B cell (primary cell): ENCODE measurements at regions of chrX and their contacts with region 1.

Region 1: GRCh38 chrX:30652527-30653414 is 452 bp upstream of the GK start:
- DNase-seq: peak; percentile 93
- ATAC-seq: peak; percentile 88
- H3K4me3 ChIP-seq: peak overlapping the region; percentile 30 to 89 (median 75)
- H3K4me3 Mint-ChIP-seq: peak overlapping the region; percentile 94
- H3K27ac ChIP-seq: peak overlapping the region; percentile 88 to 92
- H3K27ac Mint-ChIP-seq: peak overlapping the region; percentile 96
- H3K4me1 ChIP-seq: peaks cover 8 to 9% of the 10 kb centered on the region in 2 donors
- H3K4me1 Mint-ChIP-seq: peaks cover 36% of the 10 kb centered on the region
- H3K27me3 ChIP-seq: no peaks in the 10 kb centered on the region
- H3K27me3 Mint-ChIP-seq: no peaks in the 10 kb centered on the region
- CTCF ChIP-seq: no peak

Region 2: DNA sequence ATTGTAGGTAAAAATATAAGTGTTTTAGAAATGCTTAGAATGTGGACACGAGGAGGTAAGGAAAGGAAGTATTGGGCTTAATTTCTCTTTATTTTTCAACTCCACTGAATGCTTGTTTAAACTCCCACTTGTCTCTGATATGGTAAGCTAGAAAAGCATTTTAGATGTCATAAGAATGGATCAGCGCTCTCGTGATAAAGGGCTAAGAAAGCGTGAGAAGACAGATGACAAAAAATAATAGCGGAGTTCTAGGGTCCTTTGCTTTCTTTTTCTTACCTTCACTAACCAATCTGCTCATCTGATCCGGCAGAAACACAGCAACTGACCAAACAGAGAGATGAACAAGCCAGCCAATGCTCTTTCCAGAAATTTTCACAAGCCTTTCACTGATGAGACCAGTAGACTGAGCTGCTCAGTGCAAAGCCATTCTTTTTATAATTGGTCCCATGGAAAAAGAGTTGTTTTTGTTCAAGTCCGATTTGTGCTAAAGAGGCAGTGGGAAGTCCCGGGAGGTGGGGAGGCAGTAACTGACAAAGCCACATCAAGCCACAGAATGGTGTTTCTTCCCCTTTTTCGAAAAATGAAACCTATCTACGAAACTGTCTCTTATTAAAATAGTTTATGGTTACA is 75.3 kb before region 1 on chrX and contains the start of gene TASL:
- CTCF ChIA-PET with region 1: no interaction called
- POLR2A ChIA-PET with region 1: no interaction called
- intact Hi-C with region 1: loop called (anchors 1 kb)
- DNase-seq: peak; percentile 81
- ATAC-seq: peak; percentile 85
- H3K4me3 ChIP-seq: peak within 1 kb of the TSS; percentile 55 to 96 (median 76)
- H3K4me3 Mint-ChIP-seq: peak within 1 kb of the TSS; percentile 99
- H3K27ac ChIP-seq: peak within 1 kb of the TSS; percentile 85 to 95
- H3K27ac Mint-ChIP-seq: peak within 1 kb of the TSS; percentile 99
- H3K4me1 ChIP-seq: peaks cover 20% of the 10 kb centered on the region in 2 donors
- H3K4me1 Mint-ChIP-seq: peaks cover 27% of the 10 kb centered on the region
- H3K27me3 ChIP-seq: no peaks in the 10 kb centered on the region
- H3K27me3 Mint-ChIP-seq: no peaks in the 10 kb centered on the region
- CTCF ChIP-seq: no peak
- total RNA-seq, gene TASL: 25.4 and 27.0 TPM in 2 replicates

Region 3: DNA sequence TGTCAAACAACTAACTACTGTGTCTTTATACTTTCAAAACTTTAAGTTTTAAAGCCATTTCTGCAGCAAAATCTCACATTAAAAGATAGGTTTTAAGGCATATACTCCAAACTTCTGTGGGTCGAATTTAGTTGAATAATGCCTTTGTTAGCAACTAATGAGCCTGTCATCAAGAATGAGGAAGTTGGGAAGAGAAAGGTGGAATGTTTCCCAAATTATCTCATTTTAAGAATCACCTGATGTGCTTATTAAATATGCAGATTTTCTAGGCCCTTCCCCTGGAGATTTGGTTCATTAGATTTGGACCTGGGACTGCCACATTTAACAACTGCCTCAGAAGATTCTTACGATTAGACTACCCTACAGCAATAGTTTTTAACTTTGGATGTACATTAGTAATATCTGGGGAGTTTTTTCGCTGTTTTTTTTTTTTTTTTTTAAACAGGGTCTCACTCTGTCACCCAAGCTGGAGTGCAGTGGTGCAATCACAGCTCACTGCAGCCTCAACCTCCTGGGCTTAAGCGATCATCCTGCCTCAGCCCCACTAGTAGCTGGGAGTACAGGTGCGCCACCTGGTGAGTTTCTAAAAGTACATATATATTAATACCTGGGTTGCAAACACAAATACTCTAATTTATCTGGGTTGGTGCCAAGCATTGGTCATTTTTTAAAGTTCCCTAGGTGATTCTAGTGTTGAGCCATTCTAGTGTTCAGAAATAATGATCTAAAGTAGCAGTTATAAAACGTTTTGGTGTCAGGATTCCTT is 59.2 kb before region 1 on chrX:
- CTCF ChIA-PET with region 1: no interaction called
- POLR2A ChIA-PET with region 1: interaction called, 3 read pairs
- intact Hi-C with region 1: loop called (anchors 1 kb)
- DNase-seq: peak; percentile 62
- ATAC-seq: peak; percentile 46
- H3K4me3 ChIP-seq: peak overlapping the region in 1 of 5 experiments; percentile 6
- H3K4me3 Mint-ChIP-seq: peak overlapping the region; percentile 70
- H3K27ac ChIP-seq: peak overlapping the region; percentile 65 to 73
- H3K27ac Mint-ChIP-seq: peak overlapping the region; percentile 87
- H3K4me1 ChIP-seq: peaks cover 60 to 61% of the 10 kb centered on the region in 2 donors
- H3K4me1 Mint-ChIP-seq: peaks cover 68% of the 10 kb centered on the region
- H3K27me3 ChIP-seq: no peaks in the 10 kb centered on the region
- H3K27me3 Mint-ChIP-seq: no peaks in the 10 kb centered on the region
- CTCF ChIP-seq: peak; percentile 36

Region 4: DNA sequence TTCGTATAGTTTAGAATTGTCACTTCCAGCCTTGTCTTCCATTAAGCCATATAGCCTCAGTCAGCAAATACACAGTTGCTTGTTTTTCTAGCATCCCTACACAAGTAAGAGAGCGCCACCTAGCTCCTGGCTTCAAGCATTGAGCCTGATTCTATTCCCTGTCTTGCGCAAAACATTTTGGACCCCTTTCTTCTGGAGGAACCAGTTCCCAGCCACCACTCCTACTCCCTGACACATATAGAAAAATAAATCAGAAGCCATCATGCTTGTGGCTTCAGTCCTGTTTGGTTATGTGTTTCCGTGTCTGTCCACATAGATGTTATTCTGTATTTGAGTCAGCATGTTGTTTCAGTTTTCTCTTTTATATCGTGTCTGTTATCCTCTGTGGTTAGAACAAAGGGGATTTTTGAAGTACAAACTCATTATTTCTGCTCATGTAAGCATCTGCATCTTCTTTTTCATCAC is 60.3 kb after region 1 on chrX:
- CTCF ChIA-PET with region 1: no interaction called
- POLR2A ChIA-PET with region 1: no interaction called
- intact Hi-C with region 1: loop called (anchors 10 kb)
- DNase-seq: peak; percentile 18
- ATAC-seq: no peak
- H3K4me3 ChIP-seq: no peak overlapping the region
- H3K4me3 Mint-ChIP-seq: peak overlapping the region; percentile 49
- H3K27ac ChIP-seq: no peak overlapping the region
- H3K27ac Mint-ChIP-seq: peak overlapping the region; percentile 65
- H3K4me1 ChIP-seq: peaks cover 7% of the 10 kb centered on the region in 2 donors
- H3K4me1 Mint-ChIP-seq: peaks cover 8% of the 10 kb centered on the region
- H3K27me3 ChIP-seq: no peaks in the 10 kb centered on the region
- H3K27me3 Mint-ChIP-seq: no peaks in the 10 kb centered on the region
- CTCF ChIP-seq: peak; percentile 12

Region 5: GRCh38 chrX:30889147-30890140 is 236.7 kb after region 1 on chrX and contains the start of gene TAB3:
- CTCF ChIA-PET with region 1: no interaction called
- POLR2A ChIA-PET with region 1: no interaction called
- intact Hi-C with region 1: loop called (anchors 1 kb)
- DNase-seq: peak; percentile 95
- ATAC-seq: peak; percentile 92
- H3K4me3 ChIP-seq: peak within 1 kb of the TSS; percentile 46 to 80 (median 71)
- H3K4me3 Mint-ChIP-seq: peak within 1 kb of the TSS; percentile 95
- H3K27ac ChIP-seq: peak within 1 kb of the TSS; percentile 57 to 76
- H3K27ac Mint-ChIP-seq: peak within 1 kb of the TSS; percentile 95
- H3K4me1 ChIP-seq: peaks cover 0 to 10% of the 10 kb centered on the region in 2 donors
- H3K4me1 Mint-ChIP-seq: peaks cover 30% of the 10 kb centered on the region
- H3K27me3 ChIP-seq: no peaks in the 10 kb centered on the region
- H3K27me3 Mint-ChIP-seq: no peaks in the 10 kb centered on the region
- CTCF ChIP-seq: no peak
- total RNA-seq, gene TAB3: 24.4 and 26.5 TPM in 2 replicates